ENCODE measurements at regions of chr12 and their contacts with region 1.

Region 1: DNA sequence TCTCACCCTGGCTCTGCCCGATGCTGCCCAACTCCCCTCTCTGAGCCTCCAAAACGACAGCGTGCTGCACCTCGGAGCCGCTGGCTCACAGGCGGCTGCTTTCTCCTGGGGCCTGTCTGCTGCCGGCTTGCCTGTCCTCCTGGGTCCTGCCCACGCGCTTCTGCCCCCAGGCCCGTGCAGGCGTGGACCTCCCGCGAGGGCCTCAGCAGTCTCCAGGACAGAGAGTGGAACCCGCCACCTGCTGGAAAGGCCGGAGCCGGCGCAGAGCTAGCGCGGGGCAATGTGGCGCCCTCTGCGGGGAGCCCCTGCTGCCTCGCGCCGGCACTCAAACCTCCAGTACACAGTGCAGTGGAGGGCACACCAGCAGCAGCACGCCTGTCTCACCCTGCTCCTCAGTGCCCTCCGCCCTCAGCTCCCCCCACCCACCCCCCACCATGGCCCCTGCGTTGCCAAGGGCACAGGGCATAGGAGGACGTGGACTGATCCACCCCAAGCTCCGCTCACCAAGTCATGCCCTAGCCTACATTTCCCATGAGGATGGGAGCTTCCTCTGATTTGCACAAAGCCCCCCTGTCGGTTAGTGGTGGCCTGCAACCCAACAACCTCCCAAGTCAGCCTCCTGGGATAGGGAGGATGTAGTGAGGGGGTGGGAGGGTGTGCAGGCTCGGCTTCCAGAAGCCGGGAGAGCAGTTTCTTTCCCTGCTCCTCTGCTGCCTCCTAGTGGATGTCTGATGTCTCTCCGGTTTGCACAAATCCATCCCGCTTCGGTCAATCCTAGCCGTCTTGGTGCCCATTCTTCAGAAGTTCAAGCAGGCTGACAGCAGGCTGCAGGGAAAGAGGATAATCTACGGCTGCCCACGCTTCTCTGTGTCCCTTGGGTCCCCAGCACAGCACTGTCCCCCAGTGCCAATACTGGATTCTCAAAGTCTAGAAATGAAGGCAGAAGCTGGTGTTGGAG is 25.2 kb downstream of the KRT8 start:
- DNase-seq: peak; percentile 86 to 95
- H3K4me3 ChIP-seq: no peak overlapping the region
- CTCF ChIP-seq: peak in 1 of 3 donors; percentile 35
- POLR2A ChIP-seq: no peak

Region 2: GRCh38 chr12:52141875-52142274 is 737.8 kb before region 1 on chr12:
- intact Hi-C with region 1: loop called (anchors 2 kb)
- DNase-seq: no peak
- H3K4me3 ChIP-seq: no peak overlapping the region
- CTCF ChIP-seq: no peak
- POLR2A ChIP-seq: no peak

Region 3: DNA sequence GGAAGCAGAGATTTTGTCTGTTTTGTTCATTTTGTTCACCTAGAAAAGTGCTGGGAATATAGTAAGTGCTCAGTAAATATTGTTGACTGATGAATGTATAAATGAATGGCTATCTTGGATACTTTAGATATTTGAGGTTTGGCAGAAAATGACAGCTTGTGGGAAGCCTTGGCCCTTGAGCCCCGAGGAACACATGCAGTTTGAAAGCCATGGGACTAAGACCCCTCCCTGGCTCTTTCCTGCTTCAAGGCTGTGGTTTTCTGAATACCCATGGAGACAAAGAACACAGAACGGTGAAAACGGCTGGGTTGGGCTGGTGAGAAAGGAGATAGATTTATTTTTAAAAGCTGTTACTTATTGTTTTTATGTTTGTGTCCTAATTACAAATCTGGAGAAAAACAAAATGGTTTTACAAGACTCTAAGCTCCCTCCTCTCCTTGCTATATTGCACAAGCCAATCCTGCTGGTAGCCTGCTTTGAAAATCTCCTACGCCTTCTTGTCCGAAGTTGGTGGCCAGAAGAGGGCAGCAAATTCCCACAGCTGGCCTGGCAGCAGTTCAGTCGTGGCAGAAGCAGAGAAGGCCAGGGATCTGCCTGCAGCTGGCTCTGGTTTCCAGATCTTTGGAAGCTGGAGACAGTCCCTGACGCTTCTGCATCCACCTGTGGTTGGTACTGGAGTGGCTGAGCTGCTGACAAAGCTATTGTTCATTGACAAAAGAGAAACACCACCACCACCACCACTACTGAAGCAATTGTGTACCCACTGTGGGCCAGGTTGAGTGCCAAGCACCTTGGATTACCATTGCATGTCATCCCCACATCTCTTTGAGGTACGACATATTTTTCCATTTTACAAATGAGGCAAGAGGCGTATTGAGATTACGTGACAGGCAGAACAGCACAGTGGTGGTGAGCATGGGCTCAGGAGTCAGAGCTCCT is 507.2 kb before region 1 on chr12:
- intact Hi-C with region 1: loop called (anchors 5 kb)
- DNase-seq: peak; percentile 89 to 96
- H3K4me3 ChIP-seq: no peak overlapping the region
- CTCF ChIP-seq: no peak
- POLR2A ChIP-seq: no peak

Region 4: GRCh38 chr12:52582971-52583456 is 296.7 kb before region 1 on chr12:
- intact Hi-C with region 1: loop called (anchors 5 kb)
- DNase-seq: peak; percentile 71 to 87
- H3K4me3 ChIP-seq: no peak overlapping the region
- CTCF ChIP-seq: peak in 1 of 3 donors; percentile 58
- POLR2A ChIP-seq: no peak

Region 5: DNA sequence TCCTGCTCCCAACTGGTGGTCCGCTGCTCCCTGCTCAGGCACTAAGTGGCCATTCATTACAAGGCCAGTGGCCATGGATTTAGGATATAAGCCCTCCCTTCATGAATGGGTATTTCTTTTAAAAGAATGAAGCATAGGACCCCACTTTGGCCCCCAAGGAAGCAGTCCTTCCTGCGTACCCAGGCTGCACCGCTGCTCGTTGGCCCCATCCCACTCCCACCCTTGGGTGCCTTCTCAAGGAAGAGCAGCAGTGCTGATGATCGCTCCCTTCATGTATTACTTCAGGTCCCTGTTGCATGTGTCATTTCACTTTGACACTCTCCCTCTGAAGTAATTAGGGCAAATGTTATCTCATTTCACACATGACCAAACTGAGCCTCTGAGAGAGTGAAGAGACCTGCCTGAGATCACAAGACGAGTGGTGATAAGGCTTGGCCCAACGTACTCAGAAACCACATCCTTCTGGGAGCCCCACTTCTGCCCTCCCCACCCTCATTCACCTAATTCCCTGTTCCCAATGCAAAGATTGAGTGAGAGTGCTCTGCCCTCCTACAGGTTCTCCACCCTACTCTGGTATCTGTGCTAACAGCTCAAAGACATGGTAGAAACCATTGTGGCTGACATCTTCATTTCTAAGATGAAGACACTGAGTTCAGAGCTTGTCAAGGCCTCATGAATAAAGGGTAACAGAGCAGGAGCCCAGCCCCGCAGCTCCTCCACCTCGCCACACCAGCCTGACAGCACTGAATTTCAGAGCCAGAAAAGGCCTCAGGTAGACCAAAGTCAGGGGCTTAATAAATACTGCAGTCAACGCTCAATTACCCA is 217.4 kb before region 1 on chr12:
- intact Hi-C with region 1: loop called (anchors 5 kb)
- DNase-seq: no peak
- H3K4me3 ChIP-seq: no peak overlapping the region
- CTCF ChIP-seq: no peak
- POLR2A ChIP-seq: no peak

Measured in lower leg skin (tissue), 4 donors.